GM13976 (cell line): ENCODE measurements at regions of chr2 and their contacts with region 1.

Region 1: GRCh38 chr2:164061129-164061746 is 325.4 kb upstream of the FIGN start:
- DNase-seq: peak; percentile 17
- CTCF ChIP-seq: peak; percentile 67

Region 2: GRCh38 chr2:163191372-163191771 is 869.9 kb before region 1 on chr2:
- in situ Hi-C with region 1: loop called (anchors 25 kb)
- DNase-seq: peak; percentile 24
- CTCF ChIP-seq: peak; percentile 16

Region 3: GRCh38 chr2:163345908-163346573 is 715.2 kb before region 1 on chr2:
- in situ Hi-C with region 1: loop called (anchors 25 kb)
- DNase-seq: peak; percentile 55
- CTCF ChIP-seq: peak; percentile 59